GM12878 (cell line): ENCODE measurements at regions of chr3 and their contacts with region 1.

Region 1: DNA sequence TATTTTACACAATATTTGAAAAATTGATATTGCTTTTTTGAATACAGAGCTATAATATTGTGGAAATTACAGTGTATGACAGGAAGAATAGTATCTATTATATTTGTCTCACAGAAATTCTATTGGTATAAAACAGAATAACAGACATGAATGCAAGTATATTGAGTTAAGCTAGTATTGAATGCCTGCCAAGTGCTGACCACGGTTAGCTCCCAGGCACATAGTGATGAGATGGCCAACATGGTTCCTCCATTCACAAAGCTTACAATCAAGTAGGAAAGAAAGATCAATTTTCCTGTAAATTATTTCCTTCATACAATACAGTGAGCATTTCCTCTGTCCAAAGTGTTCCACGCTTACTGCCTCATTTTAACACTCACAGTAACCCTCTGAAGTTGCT is 67.6 kb downstream of the TP63 start:
- DNase-seq: no peak
- ATAC-seq: no peak
- H3K4me3 ChIP-seq: no peak overlapping the region
- H3K27ac ChIP-seq: no peak overlapping the region
- H3K4me1 ChIP-seq: no peaks in the 10 kb centered on the region
- H3K27me3 ChIP-seq: no peaks in the 10 kb centered on the region
- CTCF ChIP-seq: no peak
- EP300 ChIP-seq: no peak
- POLR2A ChIP-seq: no peak
- RAD21 ChIP-seq: no peak

Region 2: GRCh38 chr3:189685854-189686253 is 13.0 kb before region 1 on chr3:
- CTCF ChIA-PET with region 1: interaction called, 19 read pairs
- POLR2A ChIA-PET with region 1: interaction called, 3 read pairs
- RAD21 ChIA-PET with region 1: no interaction called
- SMC1A ChIA-PET with region 1: interaction called, 6 read pairs
- in situ Hi-C with region 1: no loop called
- intact Hi-C with region 1: no loop called
- DNase-seq: no peak
- ATAC-seq: no peak
- H3K4me3 ChIP-seq: no peak overlapping the region
- H3K27ac ChIP-seq: no peak overlapping the region
- H3K4me1 ChIP-seq: no peaks in the 10 kb centered on the region
- H3K27me3 ChIP-seq: no peaks in the 10 kb centered on the region
- CTCF ChIP-seq: no peak
- EP300 ChIP-seq: no peak
- POLR2A ChIP-seq: no peak
- RAD21 ChIP-seq: no peak